PC-9 (cell line): ENCODE measurements at regions of chr1 and their contacts with region 1.

Region 1: DNA sequence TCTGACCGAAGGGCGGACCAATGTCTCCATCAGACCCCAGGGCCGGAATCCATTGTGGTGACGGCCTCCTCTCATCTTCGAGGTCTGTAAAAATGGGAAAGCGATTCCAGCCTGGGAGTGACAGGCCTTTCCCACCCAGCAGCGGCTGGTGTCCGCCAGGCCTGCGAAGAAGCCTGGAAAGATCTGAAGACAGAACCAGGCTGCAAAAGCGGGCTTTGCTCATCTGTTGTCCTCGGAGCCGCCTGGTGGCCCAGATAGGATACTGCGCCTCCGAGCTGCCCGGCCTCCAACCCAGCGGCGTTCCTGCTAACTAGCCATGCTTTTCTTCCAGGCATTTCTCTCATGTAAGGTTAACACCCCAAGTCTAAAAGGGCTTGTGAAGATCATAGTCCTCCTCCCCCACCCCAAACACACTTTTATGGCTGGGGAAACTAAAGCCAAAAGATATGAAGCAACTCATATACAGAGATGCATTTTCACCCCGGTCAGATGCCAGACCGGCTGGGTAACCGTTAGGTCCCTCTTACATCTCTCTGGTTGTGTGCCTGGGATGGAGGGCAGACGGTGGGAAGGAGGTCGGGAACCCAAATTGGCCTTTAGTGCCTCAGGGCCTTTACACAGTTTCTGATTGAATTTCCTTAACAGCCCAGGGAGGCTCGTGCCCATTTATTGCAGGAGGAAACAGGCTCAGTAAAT is 1.9 kb upstream of the DHRS3 start:
- DNase-seq: peak; percentile 55 to 79
- H3K4me3 ChIP-seq: peak overlapping the region; percentile 91
- H3K27ac ChIP-seq: peak overlapping the region; percentile 90
- H3K4me1 ChIP-seq: peaks cover 14% of the 10 kb centered on the region
- H3K27me3 ChIP-seq: no peaks in the 10 kb centered on the region
- CTCF ChIP-seq: peak; percentile 90

Region 2: DNA sequence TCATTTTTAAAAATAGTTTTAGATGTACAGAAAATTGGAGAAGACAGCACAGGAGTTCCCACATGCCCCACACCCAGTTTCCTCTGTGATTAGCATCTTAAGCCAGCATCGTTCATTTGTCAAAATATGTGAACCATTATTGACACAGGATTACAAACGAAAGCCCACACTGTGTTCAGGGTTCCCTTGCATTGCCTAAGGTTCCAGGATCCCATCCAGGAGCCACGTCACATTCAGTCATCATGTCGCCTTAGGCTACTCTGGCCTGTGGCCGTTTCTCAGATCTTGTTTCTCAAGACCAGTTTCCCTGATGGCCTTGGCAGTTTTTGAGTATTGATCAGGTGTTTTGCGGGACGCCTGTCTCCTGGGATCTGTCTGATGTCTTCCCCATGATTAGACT is 487.8 kb before region 1 on chr1:
- CTCF ChIA-PET with region 1: no interaction called
- POLR2A ChIA-PET with region 1: no interaction called
- intact Hi-C with region 1: loop called (anchors 10 kb)
- DNase-seq: peak; percentile 89 to 96
- H3K4me3 ChIP-seq: no peak overlapping the region
- H3K27ac ChIP-seq: peak overlapping the region; percentile 97
- H3K4me1 ChIP-seq: peaks cover 20% of the 10 kb centered on the region
- H3K27me3 ChIP-seq: no peaks in the 10 kb centered on the region
- CTCF ChIP-seq: no peak

Region 3: DNA sequence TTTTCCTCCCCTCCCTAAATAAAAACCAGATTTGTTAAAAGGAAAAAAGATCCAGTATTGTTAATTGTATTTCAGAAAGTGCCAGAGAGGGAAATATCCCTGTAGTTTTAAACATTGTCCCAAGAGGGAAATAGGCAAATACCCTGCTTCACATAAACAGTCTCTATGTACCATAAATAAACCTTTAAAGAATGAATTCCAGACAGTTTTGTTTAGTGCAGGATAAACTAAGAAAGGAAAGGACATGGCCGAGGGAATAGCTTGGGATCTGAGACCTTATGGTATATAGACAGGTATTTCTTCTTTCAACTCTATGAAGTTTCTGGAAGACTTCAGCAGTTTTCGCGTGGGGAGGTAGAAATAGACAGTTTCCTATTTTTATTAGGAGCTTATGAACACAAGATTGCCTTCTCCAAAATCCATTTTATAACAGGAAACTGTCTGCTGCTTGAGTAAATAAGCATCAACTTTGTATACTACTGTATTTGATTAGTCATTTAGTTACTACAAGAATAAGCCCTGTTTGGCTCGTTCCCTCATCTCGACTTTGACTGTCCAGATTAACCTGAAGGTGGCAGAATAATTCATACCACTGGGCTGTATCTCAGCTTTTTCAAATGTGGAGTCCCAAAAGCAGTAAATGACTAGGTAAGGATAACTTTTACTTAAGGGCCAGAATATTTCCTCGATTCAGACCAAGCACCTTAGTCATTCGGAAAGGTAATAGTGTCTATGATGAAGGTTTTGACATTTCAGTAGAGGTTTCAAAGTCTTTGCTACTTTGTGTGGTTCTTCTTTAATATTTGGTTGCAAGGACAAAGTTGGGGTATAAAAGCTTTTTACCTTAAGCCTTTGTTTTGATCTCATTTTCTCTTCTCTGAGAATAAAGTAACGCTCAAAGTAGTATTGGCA is 212.6 kb before region 1 on chr1:
- CTCF ChIA-PET with region 1: no interaction called
- POLR2A ChIA-PET with region 1: no interaction called
- intact Hi-C with region 1: loop called (anchors 1 kb)
- DNase-seq: peak; percentile 12 to 55
- H3K4me3 ChIP-seq: no peak overlapping the region
- H3K27ac ChIP-seq: peak overlapping the region; percentile 61
- H3K4me1 ChIP-seq: peaks cover 23% of the 10 kb centered on the region
- H3K27me3 ChIP-seq: no peaks in the 10 kb centered on the region
- CTCF ChIP-seq: peak; percentile 42; the same call in 1 of the 2 replicates

Region 4: DNA sequence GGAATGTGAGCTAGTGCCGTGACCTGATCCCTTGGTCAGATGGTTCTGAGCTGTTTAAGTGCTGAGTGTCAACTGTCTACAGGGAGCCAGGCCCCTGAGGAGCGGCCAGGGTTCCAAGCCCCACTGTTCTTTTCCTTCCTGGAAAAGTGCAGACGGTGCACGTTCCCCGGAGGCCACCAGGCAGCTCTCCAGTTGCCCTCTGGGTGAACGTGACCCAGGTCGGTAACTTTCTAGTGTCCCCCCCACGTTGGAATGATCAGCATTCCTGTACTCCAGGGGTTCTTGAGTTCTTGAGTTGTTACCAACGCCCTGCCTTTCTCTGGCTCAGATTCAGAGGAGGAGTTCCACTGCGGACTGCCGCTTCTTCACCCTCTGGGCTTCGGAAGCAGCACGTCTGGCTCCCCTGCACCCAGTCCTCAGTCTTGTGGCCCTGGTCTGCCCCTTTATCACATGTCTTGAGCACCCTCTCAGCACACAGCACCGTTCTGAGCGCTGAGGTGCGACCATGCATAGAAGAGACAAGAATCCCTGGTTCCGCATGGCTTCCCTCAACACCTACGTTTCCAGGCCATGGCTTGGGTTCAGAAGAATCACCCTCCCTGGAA is 133.4 kb before region 1 on chr1:
- CTCF ChIA-PET with region 1: no interaction called
- POLR2A ChIA-PET with region 1: interaction called, 5 read pairs
- intact Hi-C with region 1: loop called (anchors 1 kb)
- DNase-seq: peak; percentile 80 to 88
- H3K4me3 ChIP-seq: no peak overlapping the region
- H3K27ac ChIP-seq: peak overlapping the region; percentile 87
- H3K4me1 ChIP-seq: peaks cover 83% of the 10 kb centered on the region
- H3K27me3 ChIP-seq: no peaks in the 10 kb centered on the region
- CTCF ChIP-seq: no peak

Region 5: GRCh38 chr1:12596007-12596821 is 23.7 kb before region 1 on chr1:
- CTCF ChIA-PET with region 1: interaction called, 3 read pairs
- POLR2A ChIA-PET with region 1: interaction called, 18 read pairs
- intact Hi-C with region 1: loop called (anchors 1 kb)
- DNase-seq: peak; percentile 90 to 95
- H3K4me3 ChIP-seq: peak overlapping the region; percentile 56; the same call in 1 of the 2 replicates
- H3K27ac ChIP-seq: peak overlapping the region; percentile 100
- H3K4me1 ChIP-seq: peaks cover 68% of the 10 kb centered on the region
- H3K27me3 ChIP-seq: no peaks in the 10 kb centered on the region
- CTCF ChIP-seq: no peak

Region 6: DNA sequence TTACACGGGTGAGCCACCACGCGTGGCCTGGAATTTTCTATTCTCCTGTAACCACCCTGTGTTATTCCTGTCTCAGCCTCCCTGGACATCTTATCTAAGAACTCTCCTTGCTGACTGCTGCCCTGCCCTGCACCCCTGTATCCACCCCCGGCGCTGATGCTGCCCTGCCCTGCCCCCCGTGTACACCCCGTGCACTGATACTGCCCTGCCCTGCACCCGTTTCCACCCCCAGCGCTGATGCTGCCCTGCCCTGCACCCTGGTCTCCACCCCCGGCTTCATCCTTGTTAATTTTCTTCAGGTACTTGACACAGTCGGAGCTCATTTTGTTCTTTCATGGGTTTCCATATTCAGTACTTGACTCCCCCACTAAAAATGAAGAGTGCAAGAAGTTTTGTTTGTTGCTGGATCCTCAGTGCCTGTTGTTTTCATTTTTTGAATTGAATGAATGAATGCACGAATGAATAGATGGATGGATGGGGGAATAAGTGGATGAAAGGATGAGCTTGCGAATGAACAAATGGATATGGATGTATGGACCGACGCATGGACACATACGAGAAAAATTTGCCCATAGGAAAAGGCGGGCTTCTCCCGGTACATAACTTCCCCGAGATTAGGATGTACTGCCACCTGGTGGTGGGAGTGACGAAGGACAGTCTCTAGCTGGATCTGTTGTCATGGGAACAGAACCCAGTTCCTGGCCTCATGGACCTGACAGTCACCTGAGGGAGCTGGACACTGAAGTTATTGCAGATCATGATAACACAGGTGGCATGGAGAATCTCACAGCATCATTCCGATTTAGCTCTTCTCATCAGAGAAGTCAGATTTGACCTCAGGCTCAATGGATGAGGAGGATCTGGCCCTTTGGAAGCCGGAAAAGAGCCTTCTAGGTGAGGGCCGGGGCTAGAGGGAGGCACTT is 38.9 kb after region 1 on chr1:
- CTCF ChIA-PET with region 1: interaction called, 3 read pairs
- POLR2A ChIA-PET with region 1: no interaction called
- intact Hi-C with region 1: loop called (anchors 1 kb)
- DNase-seq: peak; percentile 62 to 64
- H3K4me3 ChIP-seq: no peak overlapping the region
- H3K27ac ChIP-seq: no peak overlapping the region
- H3K4me1 ChIP-seq: no peaks in the 10 kb centered on the region
- H3K27me3 ChIP-seq: no peaks in the 10 kb centered on the region
- CTCF ChIP-seq: peak; percentile 88